Calu3 (cell line): ENCODE measurements at regions of chr7 and their contacts with region 1.

Region 1: GRCh38 chr7:96067321-96067720 is 254.6 kb downstream of the SLC25A13 start:
- DNase-seq: no peak
- H3K4me3 Mint-ChIP-seq: no peak overlapping the region
- H3K27ac Mint-ChIP-seq: peak overlapping the region; percentile 14
- H3K4me1 Mint-ChIP-seq: peaks cover 37% of the 10 kb centered on the region
- H3K27me3 Mint-ChIP-seq: no peaks in the 10 kb centered on the region
- CTCF ChIP-seq: no peak

Region 2: GRCh38 chr7:95916573-95917297 is 150.6 kb before region 1 on chr7:
- CTCF ChIA-PET with region 1: no interaction called
- intact Hi-C with region 1: loop called (anchors 5 kb)
- DNase-seq: peak; percentile 58
- H3K4me3 Mint-ChIP-seq: peak overlapping the region; percentile 28
- H3K27ac Mint-ChIP-seq: no peak overlapping the region
- H3K4me1 Mint-ChIP-seq: peaks cover 7% of the 10 kb centered on the region
- H3K27me3 Mint-ChIP-seq: peaks cover 18% of the 10 kb centered on the region
- CTCF ChIP-seq: peak; percentile 67